ENCODE measurements at regions of chr17 and their contacts with region 1.

Region 1: GRCh38 chr17:28405632-28406472 is at the start of gene SLC46A1:
- DNase-seq: peak in 4 of 5 donors; percentile 6 to 58 (median 16)
- H3K4me3 ChIP-seq: peak within 1 kb of the TSS; percentile 56
- H3K4me3 Mint-ChIP-seq: peak within 1 kb of the TSS; percentile 78 to 88 (median 83)
- H3K27ac ChIP-seq: no peak within 1 kb of the TSS
- H3K27ac Mint-ChIP-seq: peak within 1 kb of the TSS in 5 of 8 donors; percentile 23 to 82 (median 46)
- H3K4me1 ChIP-seq: peaks cover 6% of the 10 kb centered on the region
- H3K4me1 Mint-ChIP-seq: peaks cover 6 to 16% (median 14%) of the 10 kb centered on the region in 3 donors
- H3K27me3 ChIP-seq: no peaks in the 10 kb centered on the region
- H3K27me3 Mint-ChIP-seq: peaks cover 10 to 12% of the 10 kb centered on the region in 2 donors
- total RNA-seq, gene SLC46A1: 5.6 to 6.0 TPM

Region 2: DNA sequence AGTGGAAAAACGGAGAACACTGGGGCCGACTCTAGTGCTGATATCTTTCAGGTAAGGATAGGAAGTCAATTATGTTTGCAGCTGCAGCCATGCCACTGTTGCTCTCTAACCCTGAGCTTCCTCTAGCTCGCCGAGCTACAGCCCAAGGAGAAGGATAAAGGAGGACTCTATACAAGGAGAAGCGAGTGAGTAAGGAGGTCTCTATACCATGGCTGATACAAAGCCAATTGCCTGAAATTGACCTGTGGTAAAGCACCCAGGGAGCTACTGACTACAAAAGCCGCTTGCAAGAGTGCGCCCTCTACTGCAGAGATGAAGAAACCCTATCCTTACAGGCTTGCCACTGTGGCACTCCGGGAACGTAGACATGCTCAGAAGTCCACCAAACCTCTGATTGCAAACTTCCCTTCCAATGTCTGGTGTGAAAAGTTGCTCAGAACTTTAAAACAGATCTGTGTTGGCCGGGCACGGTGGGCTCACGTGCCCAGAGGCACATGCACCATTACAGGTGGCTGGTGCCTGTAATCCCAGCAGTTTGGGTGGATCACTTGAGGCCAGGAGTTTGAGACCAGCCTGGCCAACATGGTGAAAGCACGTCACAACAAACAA is 11.0 kb after region 1 on chr17:
- CTCF ChIA-PET with region 1: interaction called, 33 read pairs
- POLR2A ChIA-PET with region 1: no interaction called
- DNase-seq: peak in 4 of 5 donors; percentile 11 to 63 (median 40)
- H3K4me3 ChIP-seq: no peak overlapping the region
- H3K4me3 Mint-ChIP-seq: peak overlapping the region in 1 of 7 donors; percentile 31
- H3K27ac ChIP-seq: no peak overlapping the region
- H3K27ac Mint-ChIP-seq: no peak overlapping the region
- H3K4me1 ChIP-seq: no peaks in the 10 kb centered on the region
- H3K4me1 Mint-ChIP-seq: peaks cover 3 to 7% (median 7%) of the 10 kb centered on the region in 3 donors
- H3K27me3 ChIP-seq: no peaks in the 10 kb centered on the region
- H3K27me3 Mint-ChIP-seq: peaks cover 6 to 16% of the 10 kb centered on the region in 2 donors

Region 3: GRCh38 chr17:28494445-28495188 is 88.8 kb after region 1 on chr17:
- CTCF ChIA-PET with region 1: no interaction called
- POLR2A ChIA-PET with region 1: no interaction called
- DNase-seq: peak; percentile 55 to 83 (median 65)
- H3K4me3 ChIP-seq: no peak overlapping the region
- H3K4me3 Mint-ChIP-seq: no peak overlapping the region
- H3K27ac ChIP-seq: no peak overlapping the region
- H3K27ac Mint-ChIP-seq: peak overlapping the region in 1 of 8 donors; percentile 14
- H3K4me1 ChIP-seq: no peaks in the 10 kb centered on the region
- H3K4me1 Mint-ChIP-seq: no peaks in the 10 kb centered on the region
- H3K27me3 ChIP-seq: no peaks in the 10 kb centered on the region
- H3K27me3 Mint-ChIP-seq: peaks cover 3 to 14% of the 10 kb centered on the region in 2 donors